H1 (cell line): ENCODE measurements at regions of chr12 and their contacts with region 1.

Region 1: DNA sequence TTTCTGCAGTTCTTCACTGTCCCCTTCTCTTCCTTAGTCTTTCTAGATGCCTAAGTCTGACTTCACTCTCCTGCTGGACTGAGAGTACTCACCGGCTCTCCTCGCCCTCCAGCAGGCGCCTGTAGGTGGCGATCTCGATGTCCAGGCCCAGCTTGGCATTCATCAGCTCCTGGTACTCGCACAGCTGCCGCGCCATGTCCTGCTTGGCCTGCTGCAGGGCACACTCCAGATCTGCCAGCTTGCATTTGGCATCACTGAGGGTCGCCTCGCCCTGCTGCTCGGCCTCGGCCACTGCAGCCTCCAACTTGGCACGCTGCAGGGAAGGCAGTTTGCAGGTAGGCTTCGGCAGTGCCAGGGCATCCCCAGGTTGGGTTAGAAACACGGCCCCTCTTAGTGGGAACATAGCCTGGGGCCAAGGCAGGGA is 5.2 kb downstream of the KRT84 start:
- DNase-seq: peak in 1 of 2 experiments; percentile 67
- H3K4me3 ChIP-seq: no peak overlapping the region
- H3K27ac ChIP-seq: no peak overlapping the region
- H3K4me1 ChIP-seq: no peaks in the 10 kb centered on the region
- H3K27me3 ChIP-seq: no peaks in the 10 kb centered on the region
- CTCF ChIP-seq: peak; percentile 68 to 77 (median 69)
- EP300 ChIP-seq: no peak
- POLR2A ChIP-seq: no peak
- RAD21 ChIP-seq: peak; percentile 36 to 51; a peak in 3 of 4 replicates

Region 2: GRCh38 chr12:52295663-52296062 is 84.6 kb before region 1 on chr12:
- CTCF ChIA-PET with region 1: no interaction called
- POLR2A ChIA-PET with region 1: no interaction called
- DNase-seq: no peak
- H3K4me3 ChIP-seq: no peak overlapping the region
- H3K27ac ChIP-seq: no peak overlapping the region
- H3K4me1 ChIP-seq: 0 out of 7 replicates have a peak, but pooled peaks cover 0 to 2% (median 0%) of the 10 kb centered on the region in 4 experiments
- H3K27me3 ChIP-seq: peaks cover 0 to 2% (median 0%) of the 10 kb centered on the region in 4 experiments; a peak in 1 of 7 replicates
- CTCF ChIP-seq: no peak
- EP300 ChIP-seq: no peak
- POLR2A ChIP-seq: no peak
- RAD21 ChIP-seq: no peak

Region 3: DNA sequence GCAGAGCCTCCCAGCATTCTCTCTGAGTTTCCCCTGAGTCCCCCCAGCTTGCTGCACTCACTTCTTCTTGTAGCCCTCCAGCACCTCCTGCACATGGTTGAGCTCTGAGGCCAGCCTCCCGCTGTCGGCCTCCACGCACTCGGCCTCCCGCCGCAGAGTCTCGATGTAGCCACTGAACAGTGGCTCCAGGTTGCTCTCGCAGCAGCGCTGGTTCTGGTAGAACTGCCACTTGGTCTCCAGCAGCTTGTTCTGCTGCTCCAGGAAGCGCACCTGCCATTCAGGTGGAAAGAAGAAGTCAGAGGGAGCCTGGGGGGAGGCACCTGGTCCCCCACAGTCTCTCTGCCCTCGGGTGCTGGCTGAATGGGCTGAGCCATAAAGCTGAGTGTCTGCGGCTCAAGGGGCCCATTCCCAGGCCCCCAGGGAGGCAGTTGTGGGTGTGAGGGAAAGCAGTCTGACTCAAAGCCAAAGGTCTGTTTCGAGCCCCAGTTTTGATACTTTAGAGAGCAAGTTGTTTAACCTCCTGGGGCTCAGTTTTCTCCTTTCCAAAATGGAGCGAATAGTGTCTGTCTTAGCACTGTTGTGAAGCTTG is 15.3 kb before region 1 on chr12:
- CTCF ChIA-PET with region 1: interaction called, 105 read pairs
- POLR2A ChIA-PET with region 1: interaction called, 3 read pairs
- DNase-seq: no peak
- H3K4me3 ChIP-seq: no peak overlapping the region
- H3K27ac ChIP-seq: no peak overlapping the region
- H3K4me1 ChIP-seq: no peaks in the 10 kb centered on the region
- H3K27me3 ChIP-seq: no peaks in the 10 kb centered on the region
- CTCF ChIP-seq: no peak
- EP300 ChIP-seq: no peak
- POLR2A ChIP-seq: no peak
- RAD21 ChIP-seq: no peak

Region 4: GRCh38 chr12:52454411-52455216 is 74.3 kb after region 1 on chr12:
- CTCF ChIA-PET with region 1: no interaction called
- POLR2A ChIA-PET with region 1: no interaction called
- DNase-seq: no peak
- H3K4me3 ChIP-seq: no peak overlapping the region; a peak in 1 of 8 replicates
- H3K27ac ChIP-seq: no peak overlapping the region
- H3K4me1 ChIP-seq: no peaks in the 10 kb centered on the region
- H3K27me3 ChIP-seq: no peaks in the 10 kb centered on the region
- CTCF ChIP-seq: no peak
- EP300 ChIP-seq: no peak
- POLR2A ChIP-seq: no peak
- RAD21 ChIP-seq: no peak

Region 5: GRCh38 chr12:52590021-52590420 is 209.7 kb after region 1 on chr12:
- CTCF ChIA-PET with region 1: interaction called, 24 read pairs
- POLR2A ChIA-PET with region 1: no interaction called
- DNase-seq: no peak
- H3K4me3 ChIP-seq: no peak overlapping the region; a peak in 1 of 8 replicates
- H3K27ac ChIP-seq: no peak overlapping the region
- H3K4me1 ChIP-seq: no peaks in the 10 kb centered on the region
- H3K27me3 ChIP-seq: no peaks in the 10 kb centered on the region; a peak in 1 of 7 replicates
- CTCF ChIP-seq: no peak
- EP300 ChIP-seq: no peak
- POLR2A ChIP-seq: no peak
- RAD21 ChIP-seq: no peak

Region 6: GRCh38 chr12:52603314-52603713 is 223.0 kb after region 1 on chr12:
- CTCF ChIA-PET with region 1: no interaction called
- POLR2A ChIA-PET with region 1: no interaction called
- DNase-seq: peak in 1 of 2 experiments; percentile 11
- H3K4me3 ChIP-seq: no peak overlapping the region
- H3K27ac ChIP-seq: no peak overlapping the region
- H3K4me1 ChIP-seq: no peaks in the 10 kb centered on the region
- H3K27me3 ChIP-seq: peaks cover 0 to 6% (median under 1%) of the 10 kb centered on the region in 4 experiments; a peak in 5 of 7 replicates
- CTCF ChIP-seq: no peak
- EP300 ChIP-seq: no peak
- POLR2A ChIP-seq: no peak
- RAD21 ChIP-seq: no peak